CD4-positive, alpha-beta memory T cell (primary cell): ENCODE measurements at regions of chr12 and their contacts with region 1.

Region 1: DNA sequence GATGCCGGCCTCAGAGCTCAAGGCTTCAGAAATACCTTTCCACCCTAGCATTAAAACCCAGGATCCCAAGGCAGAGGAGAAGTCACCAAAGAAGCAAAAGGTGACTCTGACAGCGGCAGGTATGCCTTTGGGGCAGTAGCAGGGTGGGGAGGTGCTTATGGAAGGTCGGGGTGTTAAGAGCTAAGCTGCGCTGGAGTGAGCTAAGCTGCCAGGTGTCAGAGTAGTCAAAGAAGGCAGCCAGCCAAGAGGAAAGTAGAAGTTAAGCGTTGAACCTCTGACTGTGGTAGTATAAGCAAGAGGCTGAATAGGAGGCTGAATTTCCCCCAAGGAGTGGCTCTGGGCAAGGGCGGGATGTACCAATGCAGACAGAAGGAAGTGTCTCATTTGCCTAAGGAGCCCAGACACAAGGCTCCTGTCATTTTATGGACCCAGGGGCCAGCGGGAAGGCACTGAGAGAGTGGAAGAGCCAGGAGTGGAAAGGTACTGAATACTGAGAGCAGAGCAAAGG is 29.2 kb downstream of the DYRK4 start:
- DNase-seq: no peak
- H3K4me3 ChIP-seq: no peak overlapping the region
- H3K4me3 Mint-ChIP-seq: no peak overlapping the region
- H3K27ac ChIP-seq: no peak overlapping the region
- H3K27ac Mint-ChIP-seq: no peak overlapping the region
- H3K4me1 ChIP-seq: no peaks in the 10 kb centered on the region
- H3K4me1 Mint-ChIP-seq: no peaks in the 10 kb centered on the region
- H3K27me3 ChIP-seq: no peaks in the 10 kb centered on the region
- H3K27me3 Mint-ChIP-seq: peaks cover 10 to 13% of the 10 kb centered on the region in 2 donors

Region 2: GRCh38 chr12:4276524-4277204 is 314.6 kb before region 1 on chr12:
- CTCF ChIA-PET with region 1: no interaction called
- POLR2A ChIA-PET with region 1: no interaction called
- intact Hi-C with region 1: no loop called
- DNase-seq: peak; percentile 85 to 92 (median 88)
- H3K4me3 ChIP-seq: peak overlapping the region; percentile 84 to 96
- H3K4me3 Mint-ChIP-seq: peak overlapping the region; percentile 91 to 99 (median 96)
- H3K27ac ChIP-seq: peak overlapping the region; percentile 91
- H3K27ac Mint-ChIP-seq: peak overlapping the region; percentile 91 to 100 (median 98)
- H3K4me1 ChIP-seq: peaks cover 68% of the 10 kb centered on the region
- H3K4me1 Mint-ChIP-seq: peaks cover 34 to 88% (median 59%) of the 10 kb centered on the region in 4 donors
- H3K27me3 ChIP-seq: no peaks in the 10 kb centered on the region
- H3K27me3 Mint-ChIP-seq: no peaks in the 10 kb centered on the region

Region 3: DNA sequence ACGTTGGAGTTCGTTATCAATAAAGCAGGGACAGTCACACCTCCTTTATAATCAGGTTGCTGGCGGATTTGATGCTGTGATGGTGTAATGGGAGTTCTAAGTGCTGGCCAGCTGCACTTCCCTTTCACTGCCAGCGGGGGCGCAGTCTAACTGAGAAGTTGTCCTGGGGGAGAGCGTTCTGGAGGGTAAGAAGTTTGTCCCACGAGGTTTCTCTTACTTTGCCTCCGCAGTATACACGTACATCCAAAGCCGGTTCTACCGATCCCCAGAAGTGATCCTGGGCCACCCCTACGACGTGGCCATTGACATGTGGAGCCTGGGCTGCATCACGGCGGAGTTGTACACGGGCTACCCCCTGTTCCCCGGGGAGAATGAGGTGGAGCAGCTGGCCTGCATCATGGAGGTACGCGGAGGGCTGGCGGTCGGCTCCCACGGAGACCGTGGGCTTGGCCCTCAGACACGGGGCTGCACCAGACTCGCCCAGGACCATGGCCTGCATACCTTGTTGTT is 13.5 kb after region 1 on chr12:
- CTCF ChIA-PET with region 1: interaction called, 17 read pairs
- POLR2A ChIA-PET with region 1: no interaction called
- intact Hi-C with region 1: no loop called
- DNase-seq: peak; percentile 76 to 80 (median 78)
- H3K4me3 ChIP-seq: peak overlapping the region; percentile 85 to 89
- H3K4me3 Mint-ChIP-seq: peak overlapping the region; percentile 96 to 100 (median 99)
- H3K27ac ChIP-seq: peak overlapping the region; percentile 34
- H3K27ac Mint-ChIP-seq: peak overlapping the region; percentile 56 to 97 (median 93)
- H3K4me1 ChIP-seq: peaks cover 21% of the 10 kb centered on the region
- H3K4me1 Mint-ChIP-seq: peaks cover 12 to 33% (median 25%) of the 10 kb centered on the region in 4 donors
- H3K27me3 ChIP-seq: no peaks in the 10 kb centered on the region
- H3K27me3 Mint-ChIP-seq: peaks cover 7% of the 10 kb centered on the region in 2 donors

Region 4: GRCh38 chr12:4763549-4763948 is 172.3 kb after region 1 on chr12:
- CTCF ChIA-PET with region 1: no interaction called
- POLR2A ChIA-PET with region 1: no interaction called
- intact Hi-C with region 1: no loop called
- DNase-seq: no peak
- H3K4me3 ChIP-seq: no peak overlapping the region
- H3K4me3 Mint-ChIP-seq: no peak overlapping the region
- H3K27ac ChIP-seq: no peak overlapping the region
- H3K27ac Mint-ChIP-seq: no peak overlapping the region
- H3K4me1 ChIP-seq: no peaks in the 10 kb centered on the region
- H3K4me1 Mint-ChIP-seq: peaks cover 0 to 11% (median under 1%) of the 10 kb centered on the region in 4 donors
- H3K27me3 ChIP-seq: no peaks in the 10 kb centered on the region
- H3K27me3 Mint-ChIP-seq: no peaks in the 10 kb centered on the region